AG04449 (cell line): ENCODE measurements at regions of chr12 and their contacts with region 1.

Region 1: GRCh38 chr12:1939801-1940607 is 21.6 kb upstream of the CACNA2D4 start:
- DNase-seq: peak; percentile 28
- H3K4me3 ChIP-seq: no peak overlapping the region
- CTCF ChIP-seq: peak; percentile 89

Region 2: GRCh38 chr12:1650260-1650977 is 289.6 kb before region 1 on chr12:
- CTCF ChIA-PET with region 1: interaction called, 52 read pairs
- POLR2A ChIA-PET with region 1: interaction called, 3 read pairs
- DNase-seq: no peak
- H3K4me3 ChIP-seq: no peak overlapping the region
- CTCF ChIP-seq: no peak

Region 3: GRCh38 chr12:1804545-1805332 is 135.3 kb before region 1 on chr12:
- CTCF ChIA-PET with region 1: interaction called, 156 read pairs
- POLR2A ChIA-PET with region 1: no interaction called
- DNase-seq: peak; percentile 42
- H3K4me3 ChIP-seq: no peak overlapping the region
- CTCF ChIP-seq: no peak

Region 4: DNA sequence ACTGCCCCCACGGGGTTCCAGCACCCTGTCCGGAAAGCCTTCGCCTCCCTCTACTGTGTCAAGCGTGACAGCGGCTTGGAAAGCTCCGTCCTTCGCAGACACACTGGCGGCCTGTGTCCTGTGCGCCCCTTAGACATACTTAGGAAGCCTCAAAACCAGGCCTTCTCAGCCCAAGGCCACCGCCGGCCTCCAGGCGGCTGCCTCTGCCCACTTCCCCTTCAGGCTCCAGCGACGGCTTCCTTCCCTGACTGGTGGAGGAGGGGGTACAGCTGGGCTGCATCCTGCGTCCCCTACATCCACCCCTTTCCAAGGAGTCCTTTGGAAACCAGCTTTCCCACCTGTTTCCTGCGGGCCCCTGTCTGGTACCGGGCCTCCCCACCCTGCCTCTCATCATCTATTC is 19.0 kb before region 1 on chr12:
- CTCF ChIA-PET with region 1: interaction called, 70 read pairs
- POLR2A ChIA-PET with region 1: no interaction called
- DNase-seq: no peak
- H3K4me3 ChIP-seq: no peak overlapping the region
- CTCF ChIP-seq: no peak

Region 5: GRCh38 chr12:1956716-1957115 is 16.7 kb after region 1 on chr12:
- CTCF ChIA-PET with region 1: interaction called, 68 read pairs
- POLR2A ChIA-PET with region 1: no interaction called
- DNase-seq: no peak
- H3K4me3 ChIP-seq: no peak overlapping the region
- CTCF ChIP-seq: no peak

Region 6: DNA sequence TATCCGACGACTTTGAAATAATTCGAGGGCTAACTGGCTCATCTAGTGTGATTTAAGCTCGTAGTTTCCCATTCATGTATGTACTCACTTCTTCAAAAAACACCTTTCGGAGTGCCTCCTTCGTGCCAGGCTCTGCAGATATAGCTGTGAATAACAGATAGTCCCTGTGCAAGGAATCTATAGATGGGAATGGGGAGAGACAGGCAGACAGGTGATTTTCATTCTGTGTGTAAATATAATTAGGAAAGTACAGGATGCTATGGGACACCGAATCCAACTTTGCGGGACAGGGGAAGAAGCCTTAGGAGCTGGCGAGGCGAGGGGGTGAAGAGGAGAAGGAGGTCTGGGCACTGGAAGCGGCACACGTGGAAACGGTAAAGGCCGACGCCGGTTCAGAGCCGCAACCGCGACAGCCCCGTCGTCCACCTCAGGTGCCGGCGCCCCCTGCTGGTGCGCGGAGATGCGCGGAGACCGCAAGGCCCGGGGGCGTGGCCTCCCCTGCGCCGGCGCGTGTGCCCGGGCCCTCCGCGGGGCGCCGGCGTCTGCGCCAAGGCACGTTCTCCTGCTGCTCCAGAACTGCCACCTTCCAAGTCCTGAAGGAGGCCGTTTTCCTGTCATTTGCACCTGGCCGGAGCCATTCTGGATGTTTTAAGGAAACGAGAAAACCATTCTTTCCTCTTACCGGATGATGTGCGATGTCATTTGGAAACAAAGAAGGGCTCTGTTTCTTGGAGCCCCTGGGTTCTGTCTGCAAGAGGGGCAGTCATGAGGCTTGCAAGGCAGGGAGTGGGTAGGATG is 94.8 kb after region 1 on chr12:
- CTCF ChIA-PET with region 1: interaction called, 21 read pairs
- POLR2A ChIA-PET with region 1: no interaction called
- DNase-seq: no peak
- H3K4me3 ChIP-seq: peak overlapping the region; percentile 47
- CTCF ChIP-seq: peak; percentile 92

Region 7: GRCh38 chr12:2194060-2194459 is 254.1 kb after region 1 on chr12:
- CTCF ChIA-PET with region 1: no interaction called
- POLR2A ChIA-PET with region 1: no interaction called
- DNase-seq: no peak
- H3K4me3 ChIP-seq: no peak overlapping the region
- CTCF ChIP-seq: no peak